ENCODE measurements at regions of chr12 and their contacts with region 1.

Region 1: GRCh38 chr12:116517431-116518045 is 41.6 kb upstream of the MAP1LC3B2 start:
- DNase-seq: no peak

Region 2: DNA sequence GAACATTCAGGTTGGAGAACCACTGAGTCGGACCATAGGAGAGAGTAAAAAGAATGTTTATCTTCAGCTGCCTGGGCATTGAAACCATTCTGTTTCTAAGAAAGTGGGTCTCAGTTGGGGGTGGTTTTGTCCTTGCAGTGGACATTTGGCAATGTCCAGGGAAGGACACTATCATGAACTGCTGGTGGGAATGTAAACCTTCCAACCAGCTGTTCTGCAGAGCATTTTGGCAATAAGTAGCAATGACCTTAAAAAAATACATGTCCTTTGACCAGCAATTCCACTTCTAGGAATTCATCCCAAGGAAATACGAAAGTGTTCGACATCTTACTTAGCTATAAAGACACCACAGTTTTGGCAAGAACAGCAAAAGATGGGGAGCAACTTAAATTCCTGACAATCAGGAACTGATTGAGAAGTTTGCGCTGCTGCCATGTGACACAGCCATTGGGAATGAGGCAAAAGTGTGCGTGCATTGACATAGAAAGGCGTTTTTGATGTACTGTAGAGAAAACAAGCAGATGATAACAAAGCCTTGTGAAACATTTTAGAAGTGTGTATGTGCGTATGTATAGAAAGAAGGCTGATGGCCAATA is 41.2 kb before region 1 on chr12:
- intact Hi-C with region 1: loop called in 1 of 2 experiments (anchors 1 kb)
- DNase-seq: no peak

Region 3: GRCh38 chr12:118135788-118136558 is 1618.4 kb after region 1 on chr12 and contains the start of gene PEBP1:
- intact Hi-C with region 1: no loop called
- DNase-seq: peak; percentile 98
- total RNA-seq, gene PEBP1: 134 to 156 TPM

Region 4: DNA sequence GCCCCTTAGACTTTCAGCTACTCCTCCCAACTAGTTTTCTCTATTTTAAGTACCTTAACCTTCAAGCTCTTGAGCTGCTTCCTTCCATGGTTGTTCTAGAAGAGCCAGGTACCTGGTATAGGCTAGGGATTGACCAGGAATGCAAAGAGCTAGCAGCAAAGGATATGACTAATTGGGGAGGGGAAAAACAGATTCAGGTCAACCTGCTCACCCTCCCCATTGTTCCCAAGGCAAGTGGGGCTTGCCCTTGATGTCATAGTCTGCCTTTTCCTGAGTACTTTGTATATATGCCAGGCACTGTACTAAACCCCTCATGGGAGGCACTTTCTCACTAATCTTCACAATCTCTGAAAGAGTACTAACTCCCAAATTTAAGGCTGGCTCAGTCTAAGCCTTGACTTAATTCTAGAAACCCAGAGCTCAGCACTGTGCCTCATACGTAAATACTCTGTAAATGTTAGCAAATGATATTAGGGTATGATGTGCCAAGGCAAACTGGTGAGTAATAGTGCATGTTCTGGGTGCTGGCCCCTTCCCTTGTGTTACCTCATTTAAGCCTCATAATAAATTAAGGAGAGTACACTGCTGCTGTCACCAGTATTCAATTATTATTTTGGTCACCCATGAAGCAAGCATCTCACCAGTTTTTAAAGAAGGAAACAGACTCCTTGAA is 1901.0 kb after region 1 on chr12:
- intact Hi-C with region 1: no loop called
- DNase-seq: no peak